Transverse colon (tissue), 4 donors: ENCODE measurements at regions of chr1 and their contacts with region 1.

Region 1: GRCh38 chr1:110338886-110339406 is at the start of gene RBM15:
- DNase-seq: peak; percentile 98
- H3K4me3 ChIP-seq: peak within 1 kb of the TSS; percentile 61 to 96 (median 93)
- H3K27ac ChIP-seq: peak within 1 kb of the TSS; percentile 94 to 99 (median 97)
- H3K4me1 ChIP-seq: peaks cover 34 to 74% (median 60%) of the 10 kb centered on the region in 4 donors
- H3K27me3 ChIP-seq: no peaks in the 10 kb centered on the region
- CTCF ChIP-seq: no peak
- EP300 ChIP-seq: no peak
- POLR2A ChIP-seq: no peak
- total RNA-seq, gene RBM15: 39.3 to 69.7 (median 48.0) TPM

Region 2: GRCh38 chr1:110034451-110035235 is 304.3 kb before region 1 on chr1 and contains the start of gene STRIP1:
- in situ Hi-C with region 1: loop called in 1 of 4 experiments (anchors 25 kb)
- intact Hi-C with region 1: no loop called
- DNase-seq: peak; percentile 95
- H3K4me3 ChIP-seq: peak within 1 kb of the TSS; percentile 90 to 99 (median 99)
- H3K27ac ChIP-seq: peak within 1 kb of the TSS; percentile 93 to 96 (median 94)
- H3K4me1 ChIP-seq: peaks cover 4 to 23% (median 16%) of the 10 kb centered on the region in 4 donors
- H3K27me3 ChIP-seq: no peaks in the 10 kb centered on the region
- CTCF ChIP-seq: no peak
- EP300 ChIP-seq: no peak
- POLR2A ChIP-seq: peak; percentile 64
- total RNA-seq, gene STRIP1: 32.6 to 72.2 (median 58.7) TPM

Region 3: DNA sequence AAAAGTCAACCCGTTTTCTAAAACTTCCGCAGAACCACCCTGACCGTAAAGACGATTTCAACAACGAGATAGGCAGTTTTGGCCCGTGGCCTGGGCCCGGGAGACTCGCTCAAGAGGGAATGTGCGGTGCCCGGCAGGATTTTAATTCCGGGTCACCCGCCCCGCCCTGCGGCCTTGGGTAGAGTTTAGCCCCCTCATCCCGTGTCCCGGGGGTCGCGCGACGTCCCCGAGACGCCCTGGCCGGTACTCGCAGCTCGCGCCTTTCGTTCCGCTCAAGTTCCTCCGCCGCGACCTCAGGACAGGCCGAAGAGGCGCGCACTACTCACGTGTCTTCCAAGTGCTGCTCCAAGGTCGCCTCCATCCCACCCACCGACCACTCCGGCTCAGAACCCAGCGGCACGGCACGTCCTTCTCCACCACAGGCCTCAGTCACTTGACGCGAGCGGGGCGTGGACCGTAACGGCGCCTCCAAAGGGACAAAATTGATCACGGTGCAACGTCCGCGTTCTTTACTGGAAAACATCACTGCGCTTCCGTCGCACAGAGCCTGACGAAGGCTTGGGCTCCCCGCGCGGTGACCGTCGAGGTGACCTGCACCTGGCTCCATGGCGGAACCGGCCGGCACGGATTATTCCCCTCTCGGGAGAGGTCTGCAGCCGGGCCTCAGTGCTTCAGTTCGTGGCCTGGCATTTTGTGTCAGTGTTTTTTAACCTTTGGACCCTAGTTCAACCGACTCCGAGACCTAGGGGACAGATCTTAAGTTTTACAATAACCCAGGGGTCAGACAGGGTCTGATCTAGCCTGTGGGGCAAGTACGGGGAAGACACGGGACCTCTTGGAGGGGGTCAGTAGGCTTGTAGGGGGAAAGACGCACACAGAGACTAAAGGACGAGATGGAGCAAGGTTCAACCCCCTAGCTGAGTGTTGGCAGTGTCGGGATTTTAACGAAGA is 68.6 kb after region 1 on chr1 and contains the start of gene LAMTOR5:
- in situ Hi-C with region 1: loop called in 2 of 4 experiments (anchors 5 to 10 kb)
- intact Hi-C with region 1: no loop called
- DNase-seq: peak; percentile 95
- H3K4me3 ChIP-seq: peak within 1 kb of the TSS; percentile 67 to 78 (median 72)
- H3K27ac ChIP-seq: peak within 1 kb of the TSS; percentile 89 to 94 (median 92)
- H3K4me1 ChIP-seq: peaks cover 9 to 24% (median 16%) of the 10 kb centered on the region in 4 donors
- H3K27me3 ChIP-seq: no peaks in the 10 kb centered on the region
- CTCF ChIP-seq: peak in 2 of 5 experiments; percentile 22 to 27
- EP300 ChIP-seq: peak; percentile 73
- POLR2A ChIP-seq: peak; percentile 95
- total RNA-seq, gene LAMTOR5: 7.1 to 113 (median 38.2) TPM

Region 4: GRCh38 chr1:110425612-110426152 is 86.7 kb after region 1 on chr1:
- in situ Hi-C with region 1: no loop called
- intact Hi-C with region 1: no loop called
- DNase-seq: no peak
- H3K4me3 ChIP-seq: no peak overlapping the region
- H3K27ac ChIP-seq: no peak overlapping the region
- H3K4me1 ChIP-seq: no peaks in the 10 kb centered on the region
- H3K27me3 ChIP-seq: peaks cover 3% of the 10 kb centered on the region
- CTCF ChIP-seq: no peak
- EP300 ChIP-seq: no peak
- POLR2A ChIP-seq: no peak